ENCODE measurements at regions of chr14 and their contacts with region 1.

Region 1: DNA sequence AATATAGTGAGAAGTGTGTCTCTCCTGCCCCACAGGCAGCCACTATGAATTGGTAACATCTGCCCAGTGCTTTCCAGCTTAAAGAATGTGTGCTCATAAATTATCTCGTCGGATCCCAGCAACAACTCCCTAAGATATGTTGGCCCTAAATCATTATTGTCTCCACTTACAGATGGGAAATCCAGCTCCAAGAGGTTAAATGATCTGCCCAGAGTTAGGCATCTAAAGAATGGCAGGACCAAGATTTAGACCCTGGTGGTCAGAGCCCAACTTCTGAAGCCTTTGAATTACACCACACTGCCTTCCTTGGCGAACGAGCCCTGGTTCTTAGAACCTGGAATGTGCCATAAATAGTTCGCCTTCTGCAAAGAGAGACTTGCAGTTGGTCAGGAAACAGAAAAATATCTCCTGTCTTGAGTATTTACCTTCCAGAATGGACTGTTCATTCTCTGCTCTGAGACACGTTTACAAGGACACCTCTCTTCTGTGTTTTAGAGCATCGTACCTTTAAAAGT is 20.1 kb upstream of the PLEK2 start:
- DNase-seq: no peak
- ATAC-seq: no peak
- H3K4me3 ChIP-seq: no peak overlapping the region
- H3K4me3 Mint-ChIP-seq: no peak overlapping the region
- H3K27ac ChIP-seq: no peak overlapping the region
- H3K27ac Mint-ChIP-seq: no peak overlapping the region
- H3K4me1 ChIP-seq: peaks cover 0 to 4% of the 10 kb centered on the region in 2 experiments
- H3K4me1 Mint-ChIP-seq: no peaks in the 10 kb centered on the region
- H3K27me3 ChIP-seq: peaks cover 0 to 16% of the 10 kb centered on the region in 2 experiments
- H3K27me3 Mint-ChIP-seq: peaks cover 2 to 4% of the 10 kb centered on the region in 2 donors

Region 2: DNA sequence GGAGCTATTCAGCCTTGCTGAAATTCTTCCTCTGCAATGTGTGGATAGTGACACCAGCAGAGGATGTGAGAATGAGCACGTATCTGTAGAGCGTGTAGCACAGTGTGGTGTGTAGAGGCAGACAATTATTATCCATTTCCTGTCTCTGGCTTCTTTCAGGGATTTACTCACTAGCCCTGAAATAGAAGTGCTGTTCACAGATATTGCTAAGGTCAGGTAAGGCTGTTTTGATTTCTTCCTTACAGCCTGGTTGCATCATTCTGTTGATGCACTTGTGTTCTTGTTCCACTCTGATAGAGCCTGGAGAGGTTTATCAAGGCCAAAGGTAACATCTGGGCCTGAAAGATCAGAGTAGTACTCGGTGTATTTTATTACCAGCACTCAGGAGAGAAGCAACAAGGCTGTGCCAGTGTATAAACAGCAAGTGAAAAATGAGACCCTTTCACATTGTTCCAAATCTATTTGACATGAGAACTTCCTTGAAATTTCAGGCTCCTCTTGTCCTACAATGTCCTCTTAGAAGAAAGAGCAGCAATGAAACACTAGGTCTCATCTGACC is 204.3 kb after region 1 on chr14:
- CTCF ChIA-PET with region 1: interaction called in 1 of 2 experiments, 10 read pairs
- POLR2A ChIA-PET with region 1: no interaction called
- DNase-seq: no peak
- ATAC-seq: no peak
- H3K4me3 ChIP-seq: no peak overlapping the region
- H3K4me3 Mint-ChIP-seq: no peak overlapping the region
- H3K27ac ChIP-seq: no peak overlapping the region
- H3K27ac Mint-ChIP-seq: no peak overlapping the region
- H3K4me1 ChIP-seq: no peaks in the 10 kb centered on the region
- H3K4me1 Mint-ChIP-seq: no peaks in the 10 kb centered on the region
- H3K27me3 ChIP-seq: no peaks in the 10 kb centered on the region
- H3K27me3 Mint-ChIP-seq: no peaks in the 10 kb centered on the region